ENCODE measurements at regions of chr3 and their contacts with region 1.

Region 1: GRCh38 chr3:156449712-156450574 is 105.0 kb downstream of the SSR3 start:
- DNase-seq: peak; percentile 48
- H3K4me3 Mint-ChIP-seq: no peak overlapping the region
- H3K27ac Mint-ChIP-seq: no peak overlapping the region
- H3K4me1 Mint-ChIP-seq: peaks cover 5% of the 10 kb centered on the region
- H3K27me3 Mint-ChIP-seq: peaks cover 43% of the 10 kb centered on the region
- CTCF ChIP-seq: peak; percentile 49

Region 2: DNA sequence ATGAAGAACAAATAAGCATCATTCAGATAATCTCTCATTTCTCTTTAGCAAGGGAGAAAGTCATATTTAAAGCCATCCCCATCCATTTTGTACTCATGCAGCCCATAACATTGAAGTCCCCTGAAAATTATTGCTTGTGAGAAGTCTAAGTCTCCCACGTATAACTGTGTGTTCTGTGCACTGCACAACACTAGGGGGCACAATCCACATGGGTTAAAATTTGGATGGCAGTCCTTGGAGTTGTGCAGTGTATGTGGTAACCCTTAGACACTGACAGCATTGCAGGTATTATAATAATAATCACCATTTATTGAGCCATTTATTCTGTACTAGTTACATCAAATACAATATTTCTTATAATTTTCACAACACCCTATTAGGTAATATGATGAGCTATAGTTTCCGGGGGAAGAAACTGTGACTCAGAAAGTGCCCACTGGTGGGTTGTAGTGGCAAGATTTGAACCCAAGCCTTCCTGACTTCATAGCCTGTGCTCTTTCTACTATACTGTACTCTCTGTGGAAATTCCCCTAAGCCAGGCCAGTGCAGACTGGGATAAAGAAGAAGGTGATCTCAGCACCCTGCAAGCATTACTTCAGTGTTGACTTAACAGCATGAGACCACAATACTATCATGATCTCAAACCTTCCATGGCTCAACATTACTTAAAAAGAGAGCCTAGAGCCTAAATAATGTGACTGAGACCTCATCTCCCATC is 313.9 kb before region 1 on chr3:
- CTCF ChIA-PET with region 1: no interaction called
- POLR2A ChIA-PET with region 1: no interaction called
- intact Hi-C with region 1: no loop called
- DNase-seq: peak; percentile 26
- H3K4me3 Mint-ChIP-seq: no peak overlapping the region
- H3K27ac Mint-ChIP-seq: no peak overlapping the region
- H3K4me1 Mint-ChIP-seq: no peaks in the 10 kb centered on the region
- H3K27me3 Mint-ChIP-seq: peaks cover 80% of the 10 kb centered on the region
- CTCF ChIP-seq: peak; percentile 14

Region 3: DNA sequence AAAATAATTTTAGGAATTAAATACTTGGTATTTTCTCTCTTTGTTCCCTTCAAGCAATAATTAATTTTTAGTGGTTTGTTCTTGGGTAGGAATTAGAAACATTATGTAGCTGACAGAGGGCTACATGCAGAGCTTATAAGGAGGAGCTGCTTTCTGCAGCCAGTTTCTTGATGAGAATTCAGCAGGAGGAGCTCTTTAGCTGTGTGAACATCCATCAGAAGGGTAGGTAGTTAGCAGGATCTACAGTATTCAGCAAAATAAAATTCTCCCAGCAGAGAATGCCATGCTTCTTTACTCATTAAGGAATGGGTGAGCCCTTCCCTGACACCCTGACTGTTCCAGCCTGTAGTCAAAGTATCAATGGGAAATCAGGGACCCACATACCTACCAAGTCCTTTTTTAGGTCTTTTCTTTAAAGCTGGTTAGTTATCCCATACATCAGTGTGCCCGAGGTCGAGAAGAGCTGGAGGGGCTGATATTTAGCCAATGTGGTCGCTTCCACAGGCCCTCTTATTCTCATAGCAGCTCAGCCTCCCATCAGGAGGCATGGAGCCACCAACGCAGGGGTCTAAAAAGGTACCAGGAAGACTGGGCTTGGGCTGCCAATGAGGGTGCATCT is 275.6 kb before region 1 on chr3:
- CTCF ChIA-PET with region 1: interaction called, 20 read pairs
- POLR2A ChIA-PET with region 1: no interaction called
- intact Hi-C with region 1: no loop called
- DNase-seq: peak; percentile 51
- H3K4me3 Mint-ChIP-seq: no peak overlapping the region
- H3K27ac Mint-ChIP-seq: no peak overlapping the region
- H3K4me1 Mint-ChIP-seq: no peaks in the 10 kb centered on the region
- H3K27me3 Mint-ChIP-seq: no peaks in the 10 kb centered on the region
- CTCF ChIP-seq: peak; percentile 25

Region 4: GRCh38 chr3:156382458-156383346 is 67.2 kb before region 1 on chr3:
- CTCF ChIA-PET with region 1: interaction called, 3 read pairs
- POLR2A ChIA-PET with region 1: no interaction called
- intact Hi-C with region 1: loop called (anchors 5 kb)
- DNase-seq: peak; percentile 65
- H3K4me3 Mint-ChIP-seq: no peak overlapping the region
- H3K27ac Mint-ChIP-seq: no peak overlapping the region
- H3K4me1 Mint-ChIP-seq: no peaks in the 10 kb centered on the region
- H3K27me3 Mint-ChIP-seq: peaks cover 73% of the 10 kb centered on the region
- CTCF ChIP-seq: peak; percentile 64

Region 5: DNA sequence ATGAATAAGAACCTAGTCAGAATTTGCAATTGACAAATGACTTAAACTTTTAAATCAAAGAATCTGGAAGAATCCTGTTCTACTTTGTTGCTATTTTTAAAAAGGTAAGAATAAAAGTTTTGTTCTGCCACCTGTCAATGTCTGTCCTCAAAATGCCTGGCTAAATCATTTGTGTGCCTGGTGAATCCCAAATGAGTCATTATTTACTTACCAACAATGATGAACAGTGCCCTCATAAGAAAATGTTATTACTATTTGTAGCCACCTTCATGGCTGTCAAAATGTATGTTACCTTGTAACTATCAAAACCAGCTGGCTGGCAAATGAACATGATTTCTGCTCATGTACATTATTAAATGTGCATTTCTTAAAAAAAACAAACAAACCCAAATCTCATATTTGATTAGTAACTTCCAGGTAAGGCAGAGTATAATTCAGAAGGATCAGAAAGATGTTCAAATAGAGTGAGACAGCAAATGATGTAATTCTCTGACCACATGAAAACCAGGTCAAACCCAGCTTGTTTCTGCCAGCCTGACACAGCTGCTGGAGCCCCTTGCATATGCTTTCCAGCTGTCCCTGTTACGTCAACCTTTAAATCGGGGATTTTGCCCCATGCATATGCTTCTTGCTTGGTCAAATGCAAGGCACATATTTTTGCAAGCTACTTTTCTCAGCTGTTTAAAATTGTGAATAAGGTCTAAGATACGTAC is 32.9 kb before region 1 on chr3:
- CTCF ChIA-PET with region 1: interaction called, 13 read pairs
- POLR2A ChIA-PET with region 1: no interaction called
- intact Hi-C with region 1: no loop called
- DNase-seq: no peak
- H3K4me3 Mint-ChIP-seq: no peak overlapping the region
- H3K27ac Mint-ChIP-seq: no peak overlapping the region
- H3K4me1 Mint-ChIP-seq: no peaks in the 10 kb centered on the region
- H3K27me3 Mint-ChIP-seq: peaks cover 27% of the 10 kb centered on the region
- CTCF ChIP-seq: no peak

Region 6: DNA sequence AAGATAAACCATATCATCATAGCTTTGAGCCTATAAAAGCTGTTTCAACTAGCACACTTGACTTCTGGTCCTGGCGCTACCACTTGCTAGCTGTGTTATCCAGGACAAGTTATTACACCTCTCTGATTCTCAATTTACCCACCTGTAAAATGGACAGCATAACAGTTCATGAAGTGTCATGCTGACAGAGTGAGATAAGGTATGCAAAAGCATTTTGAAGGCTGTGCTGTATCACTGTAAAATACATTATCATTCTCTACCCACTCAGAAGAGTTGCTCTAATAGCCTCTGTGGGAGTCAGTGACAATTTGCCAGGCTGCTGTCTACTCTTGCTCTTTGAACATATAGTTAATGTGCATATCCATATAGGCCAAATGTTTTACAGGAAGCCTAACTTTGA is 11.9 kb after region 1 on chr3:
- CTCF ChIA-PET with region 1: interaction called, 16 read pairs
- POLR2A ChIA-PET with region 1: interaction called, 4 read pairs
- intact Hi-C with region 1: no loop called
- DNase-seq: no peak
- H3K4me3 Mint-ChIP-seq: no peak overlapping the region
- H3K27ac Mint-ChIP-seq: no peak overlapping the region
- H3K4me1 Mint-ChIP-seq: peaks cover under 1% of the 10 kb centered on the region
- H3K27me3 Mint-ChIP-seq: peaks cover 38% of the 10 kb centered on the region
- CTCF ChIP-seq: no peak

Region 7: GRCh38 chr3:156547637-156548036 is 97.7 kb after region 1 on chr3:
- CTCF ChIA-PET with region 1: interaction called, 14 read pairs
- POLR2A ChIA-PET with region 1: no interaction called
- intact Hi-C with region 1: no loop called
- DNase-seq: no peak
- H3K4me3 Mint-ChIP-seq: no peak overlapping the region
- H3K27ac Mint-ChIP-seq: peak overlapping the region; percentile 30
- H3K4me1 Mint-ChIP-seq: peaks cover 22% of the 10 kb centered on the region
- H3K27me3 Mint-ChIP-seq: no peaks in the 10 kb centered on the region
- CTCF ChIP-seq: no peak

Measured in MCF 10A (cell line).